PC-9 (cell line): ENCODE measurements at regions of chr4 and their contacts with region 1.

Region 1: GRCh38 chr4:88211473-88212252 is 53.2 kb upstream of the ABCG2 start:
- DNase-seq: peak; percentile 37 to 39
- H3K4me3 ChIP-seq: no peak overlapping the region
- H3K27ac ChIP-seq: no peak overlapping the region
- H3K4me1 ChIP-seq: peaks cover 6% of the 10 kb centered on the region
- H3K27me3 ChIP-seq: no peaks in the 10 kb centered on the region
- CTCF ChIP-seq: peak; percentile 78

Region 2: GRCh38 chr4:87620491-87620890 is 591.2 kb before region 1 on chr4:
- CTCF ChIA-PET with region 1: interaction called, 15 read pairs
- POLR2A ChIA-PET with region 1: no interaction called
- intact Hi-C with region 1: no loop called
- DNase-seq: no peak
- H3K4me3 ChIP-seq: no peak overlapping the region
- H3K27ac ChIP-seq: no peak overlapping the region
- H3K4me1 ChIP-seq: no peaks in the 10 kb centered on the region
- H3K27me3 ChIP-seq: no peaks in the 10 kb centered on the region
- CTCF ChIP-seq: no peak

Region 3: GRCh38 chr4:87679449-87680169 is 532.1 kb before region 1 on chr4:
- CTCF ChIA-PET with region 1: no interaction called
- POLR2A ChIA-PET with region 1: no interaction called
- intact Hi-C with region 1: loop called (anchors 5 kb)
- DNase-seq: no peak
- H3K4me3 ChIP-seq: no peak overlapping the region
- H3K27ac ChIP-seq: no peak overlapping the region
- H3K4me1 ChIP-seq: no peaks in the 10 kb centered on the region
- H3K27me3 ChIP-seq: no peaks in the 10 kb centered on the region
- CTCF ChIP-seq: peak; percentile 87

Region 4: DNA sequence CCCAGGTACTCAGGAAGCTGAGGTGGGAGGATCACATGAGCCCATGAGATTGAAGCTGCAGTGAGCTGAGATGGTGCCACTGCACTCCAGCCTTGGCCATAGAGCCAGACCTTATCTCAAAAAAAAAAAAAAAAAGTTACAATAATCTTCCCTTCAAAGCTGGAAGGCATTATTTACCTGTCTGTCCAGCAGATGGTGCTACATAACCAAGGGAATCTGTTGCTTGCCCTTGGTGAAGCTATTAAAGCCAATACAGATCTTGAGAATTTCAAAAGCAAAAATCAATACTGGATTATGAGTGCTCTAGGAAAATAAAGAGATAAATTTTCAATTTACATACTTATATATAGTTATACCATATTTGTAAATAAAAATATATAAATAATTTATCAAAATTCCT is 178.4 kb before region 1 on chr4:
- CTCF ChIA-PET with region 1: interaction called, 9 read pairs
- POLR2A ChIA-PET with region 1: no interaction called
- intact Hi-C with region 1: loop called (anchors 1 kb)
- DNase-seq: peak; percentile 24 to 39
- H3K4me3 ChIP-seq: no peak overlapping the region
- H3K27ac ChIP-seq: no peak overlapping the region
- H3K4me1 ChIP-seq: peaks cover 8% of the 10 kb centered on the region; the same call in 1 of the 2 replicates
- H3K27me3 ChIP-seq: no peaks in the 10 kb centered on the region
- CTCF ChIP-seq: peak; percentile 71

Region 5: DNA sequence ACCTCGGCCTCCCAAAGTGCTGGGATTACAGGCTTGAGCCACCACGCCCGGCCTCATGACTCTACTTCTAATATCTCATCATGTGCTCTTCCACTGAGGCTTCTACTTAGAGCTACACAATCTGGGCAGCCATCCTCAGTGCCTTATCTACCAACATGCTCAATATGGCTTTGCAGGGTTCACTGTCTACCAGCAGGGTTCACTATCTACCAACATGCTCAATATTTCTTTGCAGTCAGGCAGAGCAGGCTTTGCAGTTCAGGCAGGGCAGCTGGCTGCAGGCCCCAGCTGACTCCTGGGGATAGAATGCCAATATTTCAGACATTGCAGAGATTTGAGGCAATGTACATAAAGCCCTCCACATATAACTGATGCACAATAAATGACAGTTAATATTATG is 156.8 kb before region 1 on chr4:
- CTCF ChIA-PET with region 1: no interaction called
- POLR2A ChIA-PET with region 1: no interaction called
- intact Hi-C with region 1: loop called (anchors 1 kb)
- DNase-seq: peak in 1 of 2 experiments; percentile 18
- H3K4me3 ChIP-seq: no peak overlapping the region
- H3K27ac ChIP-seq: no peak overlapping the region
- H3K4me1 ChIP-seq: no peaks in the 10 kb centered on the region
- H3K27me3 ChIP-seq: no peaks in the 10 kb centered on the region
- CTCF ChIP-seq: peak; percentile 58

Region 6: GRCh38 chr4:89196745-89197144 is 985.1 kb after region 1 on chr4:
- CTCF ChIA-PET with region 1: no interaction called
- POLR2A ChIA-PET with region 1: no interaction called
- intact Hi-C with region 1: no loop called
- DNase-seq: no peak
- H3K4me3 ChIP-seq: no peak overlapping the region
- H3K27ac ChIP-seq: peak overlapping the region; percentile 48
- H3K4me1 ChIP-seq: no peaks in the 10 kb centered on the region; the same call in 1 of the 2 replicates
- H3K27me3 ChIP-seq: no peaks in the 10 kb centered on the region
- CTCF ChIP-seq: no peak